Activated CD8-positive, alpha-beta T cell treated with anti-CD3 and anti-CD28 coated beads for 36 hours (primary cell): ENCODE measurements at regions of chr12 and their contacts with region 1.

Region 1: GRCh38 chr12:91355150-91356006 is 172.8 kb upstream of the DCN start:
- DNase-seq: peak; percentile 72
- ATAC-seq: peak; percentile 75
- H3K4me3 Mint-ChIP-seq: no peak overlapping the region
- H3K27ac Mint-ChIP-seq: no peak overlapping the region
- H3K4me1 Mint-ChIP-seq: no peaks in the 10 kb centered on the region
- H3K27me3 Mint-ChIP-seq: peaks cover 20% of the 10 kb centered on the region
- CTCF ChIP-seq: peak; percentile 66

Region 2: DNA sequence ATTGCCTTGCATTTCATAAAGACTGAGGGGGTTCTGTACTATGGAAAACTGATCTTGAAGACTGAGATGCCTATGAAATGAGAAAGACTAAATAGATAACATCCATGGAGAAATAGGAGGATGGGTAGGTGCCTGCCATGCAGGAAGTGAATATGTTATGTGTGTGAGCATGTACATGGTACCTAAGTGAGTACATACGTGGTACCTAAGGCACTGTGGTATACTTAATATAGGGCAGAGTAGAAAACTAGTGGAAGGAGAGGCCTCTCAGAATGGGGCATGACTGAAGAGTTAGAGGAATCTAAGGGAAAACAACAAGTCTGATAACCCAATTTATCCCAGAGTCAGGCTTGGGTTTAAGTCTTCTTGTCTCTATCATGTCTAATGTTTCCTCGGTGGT is 11.0 kb before region 1 on chr12:
- CTCF ChIA-PET with region 1: interaction called, 13 read pairs
- POLR2A ChIA-PET with region 1: no interaction called
- intact Hi-C with region 1: no loop called
- DNase-seq: no peak
- ATAC-seq: no peak
- H3K4me3 Mint-ChIP-seq: no peak overlapping the region
- H3K27ac Mint-ChIP-seq: no peak overlapping the region
- H3K4me1 Mint-ChIP-seq: no peaks in the 10 kb centered on the region
- H3K27me3 Mint-ChIP-seq: peaks cover 11% of the 10 kb centered on the region
- CTCF ChIP-seq: no peak

Region 3: DNA sequence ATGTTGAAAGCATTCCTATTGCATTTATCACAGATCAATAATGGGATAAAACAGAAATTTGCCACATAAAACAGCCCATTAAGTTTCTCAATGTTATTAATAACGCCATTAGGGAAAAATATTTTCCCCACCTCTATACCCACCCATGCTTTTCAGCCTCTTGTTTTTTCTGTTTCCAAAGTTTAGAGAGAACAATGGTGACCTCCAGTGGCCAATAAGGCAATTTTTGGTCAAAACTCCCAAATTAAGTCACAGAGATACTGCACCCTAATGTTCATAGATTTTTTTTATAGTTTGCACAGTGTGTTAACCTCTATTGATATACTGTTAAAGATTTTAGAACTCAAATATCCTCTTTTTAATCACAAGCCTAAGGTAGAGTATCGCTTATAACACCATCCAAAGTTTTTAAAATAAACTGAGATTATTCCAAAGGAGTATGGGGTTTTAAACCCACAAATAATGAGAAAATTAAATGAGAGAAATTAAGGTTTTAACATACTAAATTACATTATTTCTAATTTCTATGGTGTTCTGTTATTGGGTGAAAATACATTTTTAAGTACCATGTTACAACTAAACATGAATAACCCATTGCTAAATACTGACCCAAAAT is 12.0 kb after region 1 on chr12:
- CTCF ChIA-PET with region 1: interaction called, 21 read pairs
- POLR2A ChIA-PET with region 1: no interaction called
- intact Hi-C with region 1: no loop called
- DNase-seq: no peak
- ATAC-seq: no peak
- H3K4me3 Mint-ChIP-seq: no peak overlapping the region
- H3K27ac Mint-ChIP-seq: no peak overlapping the region
- H3K4me1 Mint-ChIP-seq: no peaks in the 10 kb centered on the region
- H3K27me3 Mint-ChIP-seq: no peaks in the 10 kb centered on the region
- CTCF ChIP-seq: peak; percentile 42

Region 4: DNA sequence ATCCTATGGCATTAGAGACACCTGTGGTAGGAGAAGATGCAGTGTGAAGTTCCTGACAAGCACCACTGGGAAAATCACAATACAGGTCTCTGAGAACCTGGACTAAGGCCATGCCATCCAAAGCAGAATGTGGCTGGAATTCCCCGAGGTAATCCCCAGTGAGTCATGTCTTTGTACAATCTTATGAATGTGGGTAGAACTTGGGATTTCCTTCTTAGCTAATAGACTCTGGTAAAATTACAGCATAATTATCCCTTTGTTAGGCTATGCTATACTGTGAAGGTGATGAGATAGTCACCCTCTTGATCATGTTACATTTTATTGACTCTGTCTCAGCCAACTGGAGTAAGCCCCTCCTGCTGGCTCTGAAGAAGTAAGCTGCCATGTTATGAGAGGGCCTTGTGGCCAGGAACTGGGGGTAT is 51.6 kb after region 1 on chr12:
- CTCF ChIA-PET with region 1: no interaction called
- POLR2A ChIA-PET with region 1: no interaction called
- intact Hi-C with region 1: no loop called
- DNase-seq: peak; percentile 25
- ATAC-seq: peak; percentile 60
- H3K4me3 Mint-ChIP-seq: no peak overlapping the region
- H3K27ac Mint-ChIP-seq: no peak overlapping the region
- H3K4me1 Mint-ChIP-seq: peaks cover 5% of the 10 kb centered on the region
- H3K27me3 Mint-ChIP-seq: no peaks in the 10 kb centered on the region
- CTCF ChIP-seq: no peak

Region 5: DNA sequence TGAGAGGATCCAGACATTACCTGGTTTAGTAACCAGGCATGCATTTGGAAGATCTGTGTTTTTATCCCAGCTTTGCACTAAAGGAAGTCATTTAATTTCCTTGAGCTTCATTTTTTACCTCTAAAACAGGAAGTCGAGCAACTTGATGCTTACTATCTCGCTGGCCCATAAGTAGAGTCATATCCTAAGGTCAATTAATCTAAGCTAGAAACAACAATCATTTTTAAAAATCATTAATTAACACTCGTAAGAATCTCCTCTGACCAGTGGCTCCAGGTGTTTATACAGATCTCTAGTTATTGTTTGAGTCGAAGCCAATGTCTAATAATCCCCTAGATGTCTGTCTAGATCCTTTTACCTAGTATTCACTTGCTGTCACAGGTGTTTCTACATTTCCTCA is 183.0 kb after region 1 on chr12:
- CTCF ChIA-PET with region 1: no interaction called
- POLR2A ChIA-PET with region 1: no interaction called
- intact Hi-C with region 1: no loop called
- DNase-seq: no peak
- ATAC-seq: no peak
- H3K4me3 Mint-ChIP-seq: no peak overlapping the region
- H3K27ac Mint-ChIP-seq: no peak overlapping the region
- H3K4me1 Mint-ChIP-seq: no peaks in the 10 kb centered on the region
- H3K27me3 Mint-ChIP-seq: no peaks in the 10 kb centered on the region
- CTCF ChIP-seq: no peak